ENCODE measurements at regions of chr16 and their contacts with region 1.

Region 1: GRCh38 chr16:74606521-74607310 is at the start of gene GLG1:
- DNase-seq: peak; percentile 85
- ATAC-seq: peak; percentile 94
- H3K4me3 ChIP-seq: peak within 1 kb of the TSS; percentile 73 to 99 (median 89)
- H3K27ac ChIP-seq: peak within 1 kb of the TSS; percentile 81
- H3K4me1 ChIP-seq: peaks cover 57% of the 10 kb centered on the region
- H3K27me3 ChIP-seq: peaks cover 0 to 3% of the 10 kb centered on the region in 2 experiments; a peak in 1 of 5 replicates
- CTCF ChIP-seq: peak; percentile 37
- EP300 ChIP-seq: no peak
- POLR2A ChIP-seq: peak; percentile 97 to 99
- RAD21 ChIP-seq: peak; percentile 68
- total RNA-seq, gene GLG1: 46.1 and 87.7 TPM in 2 replicates

Region 2: GRCh38 chr16:74477226-74477625 is 129.5 kb before region 1 on chr16:
- CTCF ChIA-PET with region 1: no interaction called
- POLR2A ChIA-PET with region 1: no interaction called
- in situ Hi-C with region 1: no loop called
- intact Hi-C with region 1: loop called (anchors 10 kb)
- DNase-seq: peak; percentile 48
- ATAC-seq: peak; percentile 77
- H3K4me3 ChIP-seq: no peak overlapping the region
- H3K27ac ChIP-seq: no peak overlapping the region
- H3K4me1 ChIP-seq: peaks cover 13% of the 10 kb centered on the region
- H3K27me3 ChIP-seq: no peaks in the 10 kb centered on the region
- CTCF ChIP-seq: no peak
- EP300 ChIP-seq: no peak
- POLR2A ChIP-seq: no peak
- RAD21 ChIP-seq: no peak

Region 3: GRCh38 chr16:74570412-74571301 is 36.1 kb before region 1 on chr16:
- CTCF ChIA-PET with region 1: no interaction called
- POLR2A ChIA-PET with region 1: interaction called, 14 read pairs
- in situ Hi-C with region 1: no loop called
- intact Hi-C with region 1: loop called (anchors 5 kb)
- DNase-seq: peak; percentile 90
- ATAC-seq: peak; percentile 94
- H3K4me3 ChIP-seq: peak overlapping the region in 2 of 3 experiments; percentile 3 to 37; a peak in 1 of 6 replicates
- H3K27ac ChIP-seq: peak overlapping the region; percentile 73
- H3K4me1 ChIP-seq: peaks cover 63% of the 10 kb centered on the region
- H3K27me3 ChIP-seq: no peaks in the 10 kb centered on the region
- CTCF ChIP-seq: no peak
- EP300 ChIP-seq: peak in 1 of 2 experiments; percentile 63; a peak in 1 of 4 replicates
- POLR2A ChIP-seq: no peak
- RAD21 ChIP-seq: no peak

Region 4: GRCh38 chr16:74617206-74617788 is 10.6 kb after region 1 on chr16:
- CTCF ChIA-PET with region 1: no interaction called
- POLR2A ChIA-PET with region 1: interaction called, 17 read pairs
- in situ Hi-C with region 1: no loop called
- intact Hi-C with region 1: no loop called
- DNase-seq: no peak
- ATAC-seq: no peak
- H3K4me3 ChIP-seq: no peak overlapping the region
- H3K27ac ChIP-seq: no peak overlapping the region
- H3K4me1 ChIP-seq: no peaks in the 10 kb centered on the region
- H3K27me3 ChIP-seq: no peaks in the 10 kb centered on the region
- CTCF ChIP-seq: no peak
- EP300 ChIP-seq: no peak
- POLR2A ChIP-seq: no peak
- RAD21 ChIP-seq: no peak

Region 5: DNA sequence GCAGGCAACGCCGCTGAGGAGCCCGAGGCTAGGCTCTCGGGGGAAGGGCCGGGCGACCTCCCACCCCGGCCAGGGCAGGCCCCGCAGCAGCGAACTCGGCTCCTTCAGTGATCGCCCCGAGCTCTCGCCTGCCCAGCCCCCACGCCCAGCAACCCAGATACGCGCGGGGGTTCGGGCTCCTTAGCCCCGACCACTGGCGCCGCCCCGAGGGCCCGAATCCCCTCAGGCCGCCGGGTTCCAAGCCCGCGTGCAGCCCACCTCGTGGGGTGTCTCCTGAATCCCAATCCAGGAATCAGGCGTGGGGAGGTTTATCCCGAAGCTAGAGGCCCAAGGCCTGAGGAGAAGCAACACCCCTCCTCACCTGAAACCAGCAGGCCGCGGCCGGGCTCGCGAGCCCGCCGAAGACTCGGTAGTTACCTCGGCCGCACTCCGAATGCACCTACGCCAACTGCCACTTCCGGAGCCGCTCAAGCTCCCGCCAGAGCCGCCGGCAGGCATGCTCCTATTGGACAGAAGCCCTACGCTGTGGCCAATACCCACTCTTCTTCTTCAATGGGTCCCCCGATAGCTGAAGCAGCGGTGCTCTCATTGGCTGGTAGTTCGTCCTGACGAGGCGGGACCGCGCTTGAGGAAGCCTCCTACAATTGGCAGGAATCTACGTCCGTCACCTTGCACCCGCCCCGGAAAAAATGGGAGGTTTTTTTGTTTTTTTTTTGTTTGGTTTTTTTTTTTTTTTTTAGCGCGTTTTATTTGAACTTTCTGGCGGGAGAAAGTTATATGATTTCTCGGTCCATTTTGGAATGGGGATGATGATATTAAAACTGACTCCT is 59.9 kb after region 1 on chr16 and contains the start of gene RFWD3:
- CTCF ChIA-PET with region 1: no interaction called
- POLR2A ChIA-PET with region 1: interaction called, 19 read pairs
- in situ Hi-C with region 1: no loop called
- intact Hi-C with region 1: no loop called
- DNase-seq: peak; percentile 99
- ATAC-seq: peak; percentile 100
- H3K4me3 ChIP-seq: peak within 1 kb of the TSS; percentile 81 to 98 (median 90)
- H3K27ac ChIP-seq: peak within 1 kb of the TSS; percentile 90
- H3K4me1 ChIP-seq: peaks cover 52% of the 10 kb centered on the region
- H3K27me3 ChIP-seq: no peaks in the 10 kb centered on the region
- CTCF ChIP-seq: peak; percentile 21; the same call in 1 of the 2 replicates
- EP300 ChIP-seq: no peak; a peak in 1 of 4 replicates
- POLR2A ChIP-seq: peak; percentile 86 to 98
- RAD21 ChIP-seq: peak; percentile 46; the same call in 1 of the 2 replicates
- total RNA-seq, gene RFWD3: 62.6 and 87.6 TPM in 2 replicates

Region 6: DNA sequence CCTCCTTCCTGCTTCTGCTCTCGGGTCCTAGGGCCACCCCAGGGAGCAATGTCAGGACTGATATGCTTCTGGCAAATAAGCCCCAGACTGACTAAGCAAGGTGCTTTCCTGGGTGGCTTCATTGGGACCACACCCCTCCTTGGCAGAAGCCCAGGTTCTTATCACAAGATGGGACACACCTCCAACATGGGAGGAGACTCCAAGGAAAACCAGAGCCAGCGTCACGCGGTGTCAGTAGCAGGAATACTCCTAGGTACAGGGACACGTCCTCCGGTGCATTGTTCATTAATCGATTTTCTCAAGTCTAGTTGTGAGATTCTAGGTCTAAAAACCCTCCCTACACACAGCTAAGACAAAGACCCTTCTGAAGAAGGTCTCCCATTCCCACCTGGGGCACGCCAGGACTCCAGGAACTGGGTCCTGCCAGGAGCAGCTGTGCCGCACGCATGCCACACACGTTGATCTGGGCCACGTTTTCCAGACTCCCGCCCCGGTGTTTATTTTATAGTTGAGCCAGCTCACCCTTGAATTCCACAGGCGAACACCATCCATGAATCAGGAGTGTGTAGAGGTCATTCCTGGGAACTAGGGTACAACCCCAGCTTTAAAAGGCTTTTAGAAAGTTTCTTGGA is 137.1 kb after region 1 on chr16:
- CTCF ChIA-PET with region 1: no interaction called
- POLR2A ChIA-PET with region 1: no interaction called
- in situ Hi-C with region 1: no loop called
- intact Hi-C with region 1: no loop called
- DNase-seq: peak; percentile 52
- ATAC-seq: peak; percentile 51
- H3K4me3 ChIP-seq: peak overlapping the region; percentile 12 to 51 (median 41); a peak in 5 of 6 replicates
- H3K27ac ChIP-seq: no peak overlapping the region
- H3K4me1 ChIP-seq: peaks cover 22% of the 10 kb centered on the region
- H3K27me3 ChIP-seq: peaks cover 2 to 53% of the 10 kb centered on the region in 2 experiments; a peak in 4 of 5 replicates
- CTCF ChIP-seq: no peak
- EP300 ChIP-seq: no peak
- POLR2A ChIP-seq: no peak
- RAD21 ChIP-seq: no peak

Measured in HepG2 (cell line).